IMR-90 (cell line): ENCODE measurements at regions of chr7 and their contacts with region 1.

Region 1: GRCh38 chr7:149377386-149377785 is 83.5 kb downstream of the ZNF777 start:
- DNase-seq: no peak
- ATAC-seq: no peak
- H3K4me3 ChIP-seq: no peak overlapping the region
- H3K27ac ChIP-seq: no peak overlapping the region
- H3K4me1 ChIP-seq: no peaks in the 10 kb centered on the region
- H3K27me3 ChIP-seq: no peaks in the 10 kb centered on the region
- CTCF ChIP-seq: no peak
- POLR2A ChIP-seq: no peak
- RAD21 ChIP-seq: no peak

Region 2: DNA sequence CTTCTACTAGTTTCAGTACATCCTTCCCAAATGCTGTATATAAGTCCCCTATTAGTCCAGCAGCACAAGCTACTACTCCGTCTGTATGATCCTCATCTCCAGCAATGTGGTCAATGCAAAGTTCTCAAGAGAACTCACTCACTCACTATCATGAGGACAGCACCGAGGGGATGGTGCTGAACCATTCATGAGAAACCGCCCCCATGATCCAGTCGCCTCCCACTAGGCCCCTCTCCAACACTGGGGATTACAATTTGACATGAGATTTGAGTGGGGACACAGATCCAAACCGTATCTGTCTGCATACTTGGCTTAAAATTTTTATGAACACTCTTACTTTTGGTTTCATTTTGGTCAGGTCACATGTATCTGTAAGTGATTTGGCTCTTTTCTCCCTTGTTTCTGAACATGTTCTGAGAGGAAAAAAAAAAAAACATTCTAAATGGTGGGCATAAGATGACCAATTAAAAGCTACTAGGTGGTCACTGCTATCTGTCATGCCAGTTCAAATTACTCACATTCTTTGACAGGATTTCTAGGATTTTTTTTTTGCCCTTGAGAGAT is 55.3 kb before region 1 on chr7:
- CTCF ChIA-PET with region 1: no interaction called
- POLR2A ChIA-PET with region 1: no interaction called
- dilution Hi-C with region 1: no loop called
- in situ Hi-C with region 1: no loop called
- intact Hi-C with region 1: loop called (anchors 10 kb)
- DNase-seq: peak; percentile 21
- ATAC-seq: peak; percentile 64
- H3K4me3 ChIP-seq: peak overlapping the region; percentile 34; the same call in 1 of the 2 replicates
- H3K27ac ChIP-seq: peak overlapping the region; percentile 9; the same call in 1 of the 2 replicates
- H3K4me1 ChIP-seq: no peaks in the 10 kb centered on the region
- H3K27me3 ChIP-seq: peaks cover 6% of the 10 kb centered on the region
- CTCF ChIP-seq: no peak
- POLR2A ChIP-seq: no peak
- RAD21 ChIP-seq: no peak